Mammary epithelial cell (primary cell): ENCODE measurements at regions of chr13 and their contacts with region 1.

Region 1: GRCh38 chr13:34156841-34157365 is 339.0 kb downstream of the RFC3 start:
- DNase-seq: peak; percentile 97
- H3K4me3 ChIP-seq: no peak overlapping the region
- H3K27ac ChIP-seq: peak overlapping the region; percentile 97
- H3K4me1 ChIP-seq: peaks cover 46% of the 10 kb centered on the region
- H3K27me3 ChIP-seq: no peaks in the 10 kb centered on the region
- CTCF ChIP-seq: no peak

Region 2: GRCh38 chr13:33279414-33280273 is 877.3 kb before region 1 on chr13:
- CTCF ChIA-PET with region 1: no interaction called
- dilution Hi-C with region 1: no loop called
- in situ Hi-C with region 1: no loop called
- intact Hi-C with region 1: no loop called
- DNase-seq: peak; percentile 94
- H3K4me3 ChIP-seq: no peak overlapping the region
- H3K27ac ChIP-seq: peak overlapping the region; percentile 99
- H3K4me1 ChIP-seq: peaks cover 55% of the 10 kb centered on the region
- H3K27me3 ChIP-seq: no peaks in the 10 kb centered on the region
- CTCF ChIP-seq: no peak

Region 3: DNA sequence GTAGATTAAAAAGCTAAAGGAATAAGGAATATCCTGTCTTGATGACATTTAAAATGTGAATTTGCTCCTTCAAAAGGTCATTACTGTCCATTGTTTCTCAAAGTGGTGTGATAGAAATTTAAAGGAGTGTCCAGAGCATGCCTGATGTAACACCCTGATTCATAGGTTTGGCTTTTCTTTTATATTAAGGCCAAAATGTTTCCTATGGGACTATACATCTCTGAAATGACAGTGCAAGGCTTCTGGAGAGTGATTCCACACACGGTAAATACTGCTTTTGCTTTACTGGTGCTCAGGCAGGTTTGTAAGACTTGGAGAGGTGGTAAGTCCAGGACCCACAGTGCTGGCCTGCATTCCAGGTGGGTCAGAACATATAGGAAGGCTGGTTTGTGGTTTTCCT is 49.1 kb before region 1 on chr13:
- CTCF ChIA-PET with region 1: no interaction called
- dilution Hi-C with region 1: no loop called
- in situ Hi-C with region 1: no loop called
- intact Hi-C with region 1: loop called (anchors 5 kb)
- DNase-seq: no peak
- H3K4me3 ChIP-seq: no peak overlapping the region
- H3K27ac ChIP-seq: peak overlapping the region; percentile 59
- H3K4me1 ChIP-seq: peaks cover 11% of the 10 kb centered on the region
- H3K27me3 ChIP-seq: no peaks in the 10 kb centered on the region
- CTCF ChIP-seq: no peak

Region 4: GRCh38 chr13:34300559-34300958 is 143.7 kb after region 1 on chr13:
- CTCF ChIA-PET with region 1: no interaction called
- dilution Hi-C with region 1: no loop called
- in situ Hi-C with region 1: no loop called
- intact Hi-C with region 1: loop called (anchors 1 kb)
- DNase-seq: peak; percentile 5
- H3K4me3 ChIP-seq: no peak overlapping the region
- H3K27ac ChIP-seq: no peak overlapping the region
- H3K4me1 ChIP-seq: peaks cover 30% of the 10 kb centered on the region
- H3K27me3 ChIP-seq: no peaks in the 10 kb centered on the region
- CTCF ChIP-seq: no peak

Region 5: GRCh38 chr13:34409496-34410182 is 252.7 kb after region 1 on chr13:
- CTCF ChIA-PET with region 1: no interaction called
- dilution Hi-C with region 1: no loop called
- in situ Hi-C with region 1: no loop called
- intact Hi-C with region 1: loop called (anchors 10 kb)
- DNase-seq: no peak
- H3K4me3 ChIP-seq: no peak overlapping the region
- H3K27ac ChIP-seq: no peak overlapping the region
- H3K4me1 ChIP-seq: peaks cover 19% of the 10 kb centered on the region
- H3K27me3 ChIP-seq: no peaks in the 10 kb centered on the region
- CTCF ChIP-seq: no peak